ENCODE measurements at regions of chr5 and their contacts with region 1.

Region 1: GRCh38 chr5:135535820-135536801 is at the start of gene NEUROG1:
- DNase-seq: peak; percentile 16
- ATAC-seq: no peak
- H3K4me3 Mint-ChIP-seq: no peak within 1 kb of the TSS
- H3K27ac Mint-ChIP-seq: no peak within 1 kb of the TSS
- H3K4me1 Mint-ChIP-seq: peaks cover 8% of the 10 kb centered on the region
- H3K27me3 Mint-ChIP-seq: peaks cover 70% of the 10 kb centered on the region
- total RNA-seq, gene NEUROG1: not detected

Region 2: DNA sequence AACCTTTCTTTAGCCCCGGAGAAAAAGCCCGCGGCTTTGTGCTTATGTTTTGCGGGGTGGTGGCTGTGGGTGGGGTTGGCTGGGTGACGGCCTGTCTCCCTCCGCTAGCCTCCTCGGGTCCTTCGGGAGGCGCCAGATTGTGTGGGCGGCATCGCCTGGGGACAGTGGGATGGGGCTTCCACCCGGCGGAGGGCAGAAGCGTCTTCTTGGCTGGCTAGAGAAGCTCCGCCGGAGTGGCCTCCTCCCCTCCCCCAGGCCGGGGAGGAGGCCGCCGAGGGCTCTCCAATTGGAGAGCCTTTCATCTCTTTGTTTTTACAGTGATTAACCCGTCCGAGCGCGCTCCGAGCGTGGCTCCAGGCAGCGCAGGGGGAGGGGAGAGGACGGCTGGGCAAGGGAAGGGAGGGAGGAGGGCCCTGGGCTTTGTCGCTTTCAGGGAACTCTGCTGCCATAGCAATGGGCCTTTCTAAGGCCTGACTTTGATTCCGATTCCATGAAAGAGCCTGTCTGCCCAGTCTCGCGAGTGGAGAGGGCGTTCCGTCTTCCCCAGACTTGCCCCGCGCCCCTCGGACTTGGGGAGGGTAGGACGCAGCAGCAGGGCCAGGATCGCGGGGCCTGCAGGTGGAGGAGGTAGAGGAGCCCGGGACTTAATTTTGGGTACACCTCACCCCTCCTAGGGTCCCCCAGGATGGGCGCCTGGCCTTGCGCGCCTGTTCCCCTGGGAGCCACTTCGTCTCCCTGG is 47.2 kb before region 1 on chr5:
- CTCF ChIA-PET with region 1: interaction called, 4 read pairs
- POLR2A ChIA-PET with region 1: no interaction called
- intact Hi-C with region 1: loop called (anchors 2 to 5 kb)
- DNase-seq: no peak
- ATAC-seq: no peak
- H3K4me3 Mint-ChIP-seq: no peak overlapping the region
- H3K27ac Mint-ChIP-seq: no peak overlapping the region
- H3K4me1 Mint-ChIP-seq: peaks cover 8% of the 10 kb centered on the region
- H3K27me3 Mint-ChIP-seq: peaks cover 70% of the 10 kb centered on the region

Region 3: GRCh38 chr5:135551593-135552447 is 15.7 kb after region 1 on chr5:
- CTCF ChIA-PET with region 1: interaction called, 15 read pairs
- POLR2A ChIA-PET with region 1: no interaction called
- intact Hi-C with region 1: no loop called
- DNase-seq: peak; percentile 80
- ATAC-seq: peak; percentile 77
- H3K4me3 Mint-ChIP-seq: no peak overlapping the region
- H3K27ac Mint-ChIP-seq: no peak overlapping the region
- H3K4me1 Mint-ChIP-seq: no peaks in the 10 kb centered on the region
- H3K27me3 Mint-ChIP-seq: peaks cover 43% of the 10 kb centered on the region

Measured in activated CD4-positive, alpha-beta T cell treated with anti-CD3 and anti-CD28 coated beads for 36 hours (primary cell).